CD8-positive, alpha-beta memory T cell (primary cell): ENCODE measurements at regions of chr7 and their contacts with region 1.

Region 1: GRCh38 chr7:55255496-55256435 is 109.4 kb upstream of the LANCL2 start:
- DNase-seq: peak; percentile 45 to 64 (median 53)
- H3K4me3 ChIP-seq: peak overlapping the region; percentile 73
- H3K4me3 Mint-ChIP-seq: peak overlapping the region; percentile 86 to 92 (median 88)
- H3K27ac ChIP-seq: no peak overlapping the region
- H3K27ac Mint-ChIP-seq: peak overlapping the region in 4 of 8 donors; percentile 42 to 85 (median 61)
- H3K4me1 ChIP-seq: peaks cover 3% of the 10 kb centered on the region
- H3K4me1 Mint-ChIP-seq: peaks cover 11 to 24% (median 12%) of the 10 kb centered on the region in 3 donors
- H3K27me3 ChIP-seq: peaks cover 22% of the 10 kb centered on the region
- H3K27me3 Mint-ChIP-seq: peaks cover 30 to 70% of the 10 kb centered on the region in 2 donors

Region 2: GRCh38 chr7:54773472-54774399 is 482.0 kb before region 1 on chr7:
- CTCF ChIA-PET with region 1: interaction called, 11 read pairs
- POLR2A ChIA-PET with region 1: no interaction called
- DNase-seq: peak; percentile 32 to 70 (median 49)
- H3K4me3 ChIP-seq: peak overlapping the region; percentile 39
- H3K4me3 Mint-ChIP-seq: peak overlapping the region; percentile 69 to 82 (median 79)
- H3K27ac ChIP-seq: no peak overlapping the region
- H3K27ac Mint-ChIP-seq: peak overlapping the region in 6 of 8 donors; percentile 22 to 69 (median 48)
- H3K4me1 ChIP-seq: no peaks in the 10 kb centered on the region
- H3K4me1 Mint-ChIP-seq: peaks cover 7 to 12% (median 9%) of the 10 kb centered on the region in 3 donors
- H3K27me3 ChIP-seq: peaks cover 3% of the 10 kb centered on the region
- H3K27me3 Mint-ChIP-seq: peaks cover 13 to 55% of the 10 kb centered on the region in 2 donors

Region 3: GRCh38 chr7:55206235-55207029 is 49.3 kb before region 1 on chr7:
- CTCF ChIA-PET with region 1: no interaction called
- POLR2A ChIA-PET with region 1: no interaction called
- DNase-seq: no peak
- H3K4me3 ChIP-seq: no peak overlapping the region
- H3K4me3 Mint-ChIP-seq: no peak overlapping the region
- H3K27ac ChIP-seq: no peak overlapping the region
- H3K27ac Mint-ChIP-seq: no peak overlapping the region
- H3K4me1 ChIP-seq: no peaks in the 10 kb centered on the region
- H3K4me1 Mint-ChIP-seq: no peaks in the 10 kb centered on the region
- H3K27me3 ChIP-seq: no peaks in the 10 kb centered on the region
- H3K27me3 Mint-ChIP-seq: peaks cover 0 to 2% of the 10 kb centered on the region in 2 donors